Naive thymus-derived CD4-positive, alpha-beta T cell (primary cell): ENCODE measurements at regions of chr7 and their contacts with region 1.

Region 1: DNA sequence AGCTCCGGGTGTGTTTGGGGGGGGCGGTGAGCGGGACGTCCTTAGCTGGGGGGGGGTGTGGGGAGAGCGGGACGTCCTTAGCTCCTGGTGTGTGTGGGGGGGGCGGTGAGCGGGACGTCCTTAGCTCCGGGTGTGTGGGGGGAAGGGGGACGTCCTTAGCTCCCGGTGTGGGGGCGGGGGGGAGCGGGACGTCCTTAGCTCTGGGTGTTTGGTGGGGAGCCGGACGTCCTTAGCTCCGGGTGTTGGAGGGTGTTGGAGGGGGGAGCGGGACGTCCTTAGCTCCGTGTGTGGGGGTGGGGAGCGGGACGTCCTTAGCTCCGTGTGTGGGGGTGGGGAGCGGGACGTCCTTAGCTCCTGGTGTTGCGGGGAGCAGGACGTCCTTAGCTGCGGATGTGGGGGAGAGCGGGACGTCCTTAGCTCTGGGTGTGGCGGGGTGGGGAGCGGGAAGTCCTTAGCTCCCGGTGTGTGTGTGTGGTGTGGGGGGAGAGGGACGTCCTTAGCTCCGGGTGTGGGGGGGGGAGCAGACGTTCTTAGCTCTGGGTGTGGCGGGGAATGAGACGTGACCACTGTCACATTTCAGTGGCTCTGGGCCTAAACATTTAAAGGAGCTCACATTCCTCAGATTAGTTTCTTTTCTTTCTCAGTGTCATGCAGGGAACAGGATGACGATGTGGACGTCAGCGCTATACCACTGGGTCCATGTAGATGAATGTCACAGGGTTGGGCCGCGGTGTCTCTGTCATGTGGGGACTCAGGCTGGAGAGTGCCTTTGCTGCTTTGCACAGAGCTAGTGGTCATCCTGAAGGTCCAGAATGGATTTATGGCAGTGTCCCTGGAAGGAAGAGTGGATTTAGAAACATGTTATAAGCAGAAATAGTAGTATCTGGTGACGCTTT is 7.5 kb downstream of the DYNC2I1 start:
- DNase-seq: peak in 8 of 9 donors; percentile 23 to 50 (median 40)
- ATAC-seq: peak; percentile 77
- H3K4me3 ChIP-seq: peak overlapping the region; percentile 44
- H3K4me3 Mint-ChIP-seq: peak overlapping the region; percentile 86 to 98 (median 90)
- H3K27ac ChIP-seq: peak overlapping the region; percentile 62
- H3K27ac Mint-ChIP-seq: peak overlapping the region; percentile 85 to 98 (median 94)
- H3K4me1 ChIP-seq: peaks cover 0 to 22% of the 10 kb centered on the region in 2 donors
- H3K4me1 Mint-ChIP-seq: peaks cover 15 to 72% (median 62%) of the 10 kb centered on the region in 7 donors
- H3K27me3 ChIP-seq: no peaks in the 10 kb centered on the region
- H3K27me3 Mint-ChIP-seq: no peaks in the 10 kb centered on the region

Region 2: DNA sequence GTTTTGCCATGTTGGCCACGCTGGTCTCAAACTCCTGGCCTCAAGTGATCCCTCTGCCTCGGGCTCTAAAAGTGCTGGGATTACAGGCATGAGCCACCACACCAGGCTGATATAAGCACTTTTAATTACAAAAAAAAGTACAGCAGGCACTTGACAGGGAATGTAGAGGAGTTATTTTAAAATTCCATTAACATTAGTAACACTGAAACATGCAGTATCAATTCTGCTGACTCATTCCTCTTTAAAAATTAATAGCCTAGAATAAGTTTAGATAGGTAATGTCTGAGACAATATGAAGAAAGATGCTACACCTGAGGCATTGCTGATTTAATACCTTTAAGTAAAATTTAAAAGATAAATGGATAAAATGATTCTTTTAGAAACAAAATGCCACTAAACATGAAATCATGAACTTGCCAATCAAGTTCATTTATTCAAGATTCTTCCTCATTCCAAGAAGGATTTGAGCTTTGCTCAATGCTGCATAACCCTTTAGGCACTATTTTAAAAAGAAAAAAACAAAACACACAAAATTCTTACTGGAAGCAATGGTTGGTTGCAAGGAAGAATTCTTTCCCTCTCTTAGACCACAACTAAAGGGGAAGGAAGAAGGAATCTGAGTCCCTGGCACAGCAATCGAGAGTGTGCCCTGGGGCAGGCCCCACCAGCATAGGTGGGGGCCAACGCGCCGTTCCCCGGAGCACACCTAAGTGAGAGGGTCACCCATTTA is 61.2 kb before region 1 on chr7:
- CTCF ChIA-PET with region 1: no interaction called
- POLR2A ChIA-PET with region 1: no interaction called
- intact Hi-C with region 1: loop called in 1 of 2 experiments (anchors 2 kb)
- DNase-seq: no peak
- ATAC-seq: peak; percentile 28
- H3K4me3 ChIP-seq: no peak overlapping the region
- H3K4me3 Mint-ChIP-seq: peak overlapping the region; percentile 34 to 78 (median 67)
- H3K27ac ChIP-seq: peak overlapping the region; percentile 39
- H3K27ac Mint-ChIP-seq: peak overlapping the region; percentile 67 to 87 (median 81)
- H3K4me1 ChIP-seq: peaks cover 13 to 23% of the 10 kb centered on the region in 2 donors
- H3K4me1 Mint-ChIP-seq: peaks cover 32 to 86% (median 65%) of the 10 kb centered on the region in 7 donors
- H3K27me3 ChIP-seq: no peaks in the 10 kb centered on the region
- H3K27me3 Mint-ChIP-seq: no peaks in the 10 kb centered on the region

Region 3: GRCh38 chr7:158847451-158847866 is 16.4 kb before region 1 on chr7:
- CTCF ChIA-PET with region 1: interaction called, 3 read pairs
- POLR2A ChIA-PET with region 1: interaction called, 12 read pairs
- intact Hi-C with region 1: no loop called
- DNase-seq: no peak
- ATAC-seq: peak; percentile 47
- H3K4me3 ChIP-seq: peak overlapping the region; percentile 47
- H3K4me3 Mint-ChIP-seq: peak overlapping the region; percentile 67 to 90 (median 84)
- H3K27ac ChIP-seq: peak overlapping the region; percentile 75
- H3K27ac Mint-ChIP-seq: peak overlapping the region; percentile 87 to 100 (median 94)
- H3K4me1 ChIP-seq: peaks cover 15 to 16% of the 10 kb centered on the region in 2 donors
- H3K4me1 Mint-ChIP-seq: peaks cover 1 to 41% (median 30%) of the 10 kb centered on the region in 7 donors
- H3K27me3 ChIP-seq: no peaks in the 10 kb centered on the region
- H3K27me3 Mint-ChIP-seq: peaks cover 0 to 3% (median 0%) of the 10 kb centered on the region in 5 donors